ENCODE measurements at regions of chr12 and their contacts with region 1.

Region 1: DNA sequence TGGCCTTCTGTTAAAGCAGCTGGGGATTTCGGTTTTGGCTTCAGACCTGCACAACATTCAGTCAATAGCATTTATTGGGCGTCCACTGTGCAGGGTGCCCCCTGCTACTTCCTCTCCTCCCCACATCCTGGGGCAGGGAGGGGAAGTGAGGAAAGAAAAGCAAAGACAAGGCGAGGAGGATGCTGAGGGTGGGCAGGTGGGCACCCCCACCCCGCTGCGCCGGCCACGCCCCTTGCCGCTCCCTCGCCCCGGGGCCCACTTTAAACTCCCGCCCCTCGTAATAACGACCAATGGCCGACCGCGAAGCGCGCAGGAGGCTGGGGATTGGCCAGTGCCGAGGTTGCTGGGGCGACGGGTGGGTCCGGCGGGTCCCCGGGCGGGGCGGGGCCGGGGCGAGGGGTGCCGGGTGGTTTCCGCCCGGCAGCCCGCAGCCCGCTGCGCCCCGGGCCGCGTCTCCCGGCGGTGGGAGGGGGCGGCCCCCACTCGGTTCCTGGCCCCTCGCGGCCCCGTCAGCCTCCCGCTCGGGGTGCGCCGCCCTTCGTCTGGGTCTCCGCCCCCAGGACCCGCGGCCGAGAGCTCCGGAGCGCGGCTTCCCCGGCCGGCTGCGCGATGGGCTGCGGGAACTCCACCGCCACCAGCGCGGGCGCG is at the start of gene C12orf75:
- DNase-seq: peak; percentile 95
- H3K4me3 Mint-ChIP-seq: peak within 1 kb of the TSS; percentile 90
- H3K27ac Mint-ChIP-seq: peak within 1 kb of the TSS; percentile 88
- H3K4me1 Mint-ChIP-seq: peaks cover 81% of the 10 kb centered on the region
- H3K27me3 Mint-ChIP-seq: no peaks in the 10 kb centered on the region
- total RNA-seq, gene C12orf75: 288 to 312 TPM

Region 2: GRCh38 chr12:104763168-104763805 is 567.1 kb before region 1 on chr12:
- CTCF ChIA-PET with region 1: no interaction called
- POLR2A ChIA-PET with region 1: no interaction called
- DNase-seq: no peak
- H3K4me3 Mint-ChIP-seq: no peak overlapping the region
- H3K27ac Mint-ChIP-seq: peak overlapping the region; percentile 71
- H3K4me1 Mint-ChIP-seq: peaks cover 40% of the 10 kb centered on the region
- H3K27me3 Mint-ChIP-seq: no peaks in the 10 kb centered on the region

Region 3: DNA sequence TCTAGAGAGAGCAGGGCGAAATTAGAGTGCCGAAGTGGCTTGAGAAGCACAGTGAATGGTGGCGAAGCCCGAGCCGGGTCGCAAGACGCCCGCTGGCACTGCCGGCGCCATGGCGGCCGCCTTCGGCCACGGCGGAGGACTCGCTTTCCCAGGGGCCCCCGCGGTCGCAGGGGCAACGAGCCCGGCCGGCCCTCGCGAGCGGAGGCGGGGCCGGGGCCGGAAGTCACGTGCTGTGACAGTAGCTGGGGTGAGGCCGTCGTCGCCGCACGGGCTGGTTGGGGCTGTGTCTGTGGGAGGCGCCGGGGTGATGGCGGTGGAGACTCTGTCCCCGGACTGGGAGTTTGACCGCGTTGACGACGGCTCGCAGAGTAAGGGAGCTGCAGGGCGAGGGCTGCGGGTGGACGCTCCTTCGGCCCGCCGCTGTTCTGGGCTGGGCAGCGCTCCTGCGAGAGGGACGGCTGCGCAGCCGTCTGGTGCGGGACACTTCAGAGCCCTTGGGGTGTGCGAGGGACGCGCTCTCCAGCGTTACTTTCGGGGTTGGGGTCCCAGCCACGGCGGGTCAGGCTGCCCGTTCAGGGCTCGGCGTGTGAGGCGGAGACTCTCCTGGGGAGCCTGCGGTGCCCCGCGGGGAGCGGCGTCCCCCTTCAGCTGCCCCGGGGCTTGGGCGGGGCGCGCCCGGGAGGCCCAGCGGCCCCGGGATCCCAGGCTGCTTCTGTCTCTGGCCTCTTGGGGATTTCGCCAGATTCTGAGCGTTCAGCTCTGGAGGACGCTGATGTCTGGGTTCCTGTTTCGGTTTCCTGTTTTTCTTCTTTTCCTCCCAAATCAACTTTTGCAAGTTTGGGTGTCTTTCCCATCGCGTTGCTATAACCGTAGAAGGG is 222.7 kb before region 1 on chr12 and contains the start of gene WASHC4:
- CTCF ChIA-PET with region 1: no interaction called
- POLR2A ChIA-PET with region 1: interaction called, 14 read pairs
- DNase-seq: peak; percentile 96
- H3K4me3 Mint-ChIP-seq: peak within 1 kb of the TSS; percentile 92
- H3K27ac Mint-ChIP-seq: peak within 1 kb of the TSS; percentile 96
- H3K4me1 Mint-ChIP-seq: peaks cover 37% of the 10 kb centered on the region
- H3K27me3 Mint-ChIP-seq: peaks cover 12% of the 10 kb centered on the region
- total RNA-seq, gene WASHC4: 48.4 to 50.1 TPM

Region 4: DNA sequence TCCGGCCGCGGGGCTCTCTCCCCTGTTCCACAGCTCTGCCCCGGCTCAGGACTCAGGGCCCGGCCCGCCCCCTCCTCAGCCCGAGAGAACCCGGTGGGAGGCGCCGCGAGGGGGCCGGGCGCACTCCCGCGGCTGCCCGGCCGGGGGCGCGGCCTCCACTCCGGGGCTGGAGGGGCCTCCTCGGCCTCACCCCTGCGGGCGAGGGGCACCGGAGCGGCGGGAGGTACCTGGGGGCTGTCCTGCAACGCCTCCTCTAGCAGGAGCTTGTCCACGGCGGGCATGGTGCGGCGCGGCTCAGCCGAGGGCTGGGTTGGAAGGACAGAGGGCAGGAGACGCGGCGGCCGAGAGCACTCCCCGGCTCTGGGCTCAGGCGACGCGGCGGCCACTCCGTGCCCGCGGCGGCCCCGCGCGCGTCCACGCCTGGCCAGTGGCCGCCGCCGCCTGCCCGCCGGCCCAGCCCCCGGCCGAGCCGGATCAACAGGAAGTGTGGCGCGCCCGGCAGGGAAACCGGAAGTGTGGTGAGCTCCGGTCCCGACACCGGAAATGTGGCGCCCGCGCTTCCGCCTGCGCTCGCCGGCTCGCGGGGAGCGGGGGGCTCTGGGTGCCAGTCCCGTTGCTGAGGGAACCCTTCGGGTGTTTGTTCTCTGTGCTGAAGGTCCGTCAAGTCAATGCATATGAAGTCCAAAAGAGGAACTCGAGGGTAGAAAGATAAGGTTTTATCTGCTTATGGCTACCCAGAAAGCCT is 94.5 kb before region 1 on chr12 and contains the start of gene APPL2:
- CTCF ChIA-PET with region 1: interaction called, 5 read pairs
- POLR2A ChIA-PET with region 1: interaction called, 23 read pairs
- DNase-seq: peak; percentile 79
- H3K4me3 Mint-ChIP-seq: peak within 1 kb of the TSS; percentile 90
- H3K27ac Mint-ChIP-seq: peak within 1 kb of the TSS; percentile 86
- H3K4me1 Mint-ChIP-seq: peaks cover 35% of the 10 kb centered on the region
- H3K27me3 Mint-ChIP-seq: peaks cover 2% of the 10 kb centered on the region
- total RNA-seq, gene APPL2: 32.2 to 34.2 TPM

Region 5: GRCh38 chr12:105317942-105318621 is 12.3 kb before region 1 on chr12:
- CTCF ChIA-PET with region 1: interaction called, 14 read pairs
- POLR2A ChIA-PET with region 1: interaction called, 41 read pairs
- DNase-seq: no peak
- H3K4me3 Mint-ChIP-seq: no peak overlapping the region
- H3K27ac Mint-ChIP-seq: no peak overlapping the region
- H3K4me1 Mint-ChIP-seq: peaks cover 50% of the 10 kb centered on the region
- H3K27me3 Mint-ChIP-seq: no peaks in the 10 kb centered on the region

Region 6: DNA sequence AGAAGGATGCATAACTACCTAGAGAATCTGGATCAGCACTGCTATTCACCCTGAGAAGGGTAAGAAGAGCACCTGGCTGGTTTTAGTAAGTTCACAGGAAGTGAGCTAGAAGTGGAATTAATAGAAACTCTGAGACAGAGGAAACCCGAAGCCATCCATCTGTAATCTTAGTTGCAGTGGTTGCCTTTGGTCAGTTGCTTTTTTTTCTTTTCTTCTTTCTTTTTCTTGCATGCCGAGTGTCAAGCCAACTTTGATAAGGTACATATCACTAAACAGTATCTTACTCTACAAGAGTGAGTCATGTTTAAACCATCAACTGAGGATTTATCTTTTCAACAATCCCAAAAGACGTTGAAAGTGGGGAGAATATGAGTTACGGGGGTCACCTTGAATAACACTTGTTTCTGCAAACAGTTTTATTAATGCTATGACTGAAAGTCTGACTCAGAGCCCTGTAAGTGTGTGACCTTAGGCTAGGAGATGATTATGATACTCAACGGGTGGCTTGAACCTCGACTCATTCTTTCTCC is 26.8 kb after region 1 on chr12:
- CTCF ChIA-PET with region 1: interaction called, 3 read pairs
- POLR2A ChIA-PET with region 1: interaction called, 22 read pairs
- DNase-seq: no peak
- H3K4me3 Mint-ChIP-seq: no peak overlapping the region
- H3K27ac Mint-ChIP-seq: peak overlapping the region; percentile 58
- H3K4me1 Mint-ChIP-seq: peaks cover 54% of the 10 kb centered on the region
- H3K27me3 Mint-ChIP-seq: no peaks in the 10 kb centered on the region

Region 7: GRCh38 chr12:105420659-105421240 is 90.3 kb after region 1 on chr12:
- CTCF ChIA-PET with region 1: no interaction called
- POLR2A ChIA-PET with region 1: no interaction called
- DNase-seq: peak; percentile 71
- H3K4me3 Mint-ChIP-seq: no peak overlapping the region
- H3K27ac Mint-ChIP-seq: no peak overlapping the region
- H3K4me1 Mint-ChIP-seq: peaks cover 2% of the 10 kb centered on the region
- H3K27me3 Mint-ChIP-seq: no peaks in the 10 kb centered on the region